KBM-7 (cell line): ENCODE measurements at regions of chrX and their contacts with region 1.

Region 1: GRCh38 chrX:154840856-154841255 is 6.4 kb upstream of the SMIM9 start:
- DNase-seq: peak; percentile 86

Region 2: DNA sequence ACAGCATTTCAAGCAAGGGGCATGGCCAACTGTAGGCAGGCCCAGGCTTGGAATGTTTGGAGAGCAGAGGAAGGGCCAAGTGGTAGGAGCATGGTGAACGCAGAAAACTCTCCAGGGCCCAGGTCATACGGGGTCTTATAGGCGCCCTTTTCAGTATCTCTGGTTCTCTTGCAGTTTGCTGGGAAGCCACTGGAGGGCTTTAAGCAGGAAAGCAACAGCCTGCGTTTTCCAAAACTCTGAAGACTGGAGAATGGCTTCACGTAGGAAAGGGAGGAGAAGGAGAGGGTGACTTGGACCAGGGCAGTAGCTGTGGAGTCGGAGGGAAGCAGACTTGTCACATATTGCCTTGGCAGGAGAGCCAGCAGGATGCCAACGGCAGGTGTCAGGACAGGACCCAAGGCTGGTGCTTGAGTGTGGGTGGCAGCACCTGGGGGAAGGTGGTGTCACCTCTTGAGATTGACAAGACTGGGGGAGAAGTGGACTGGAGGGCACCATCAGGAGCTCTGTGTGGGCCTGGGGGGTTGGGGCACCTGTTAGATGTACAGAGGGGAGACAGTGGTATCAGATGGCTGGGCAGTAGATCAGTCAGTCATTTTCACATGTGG is 523.4 kb before region 1 on chrX:
- in situ Hi-C with region 1: no loop called
- DNase-seq: peak; percentile 45

Region 3: DNA sequence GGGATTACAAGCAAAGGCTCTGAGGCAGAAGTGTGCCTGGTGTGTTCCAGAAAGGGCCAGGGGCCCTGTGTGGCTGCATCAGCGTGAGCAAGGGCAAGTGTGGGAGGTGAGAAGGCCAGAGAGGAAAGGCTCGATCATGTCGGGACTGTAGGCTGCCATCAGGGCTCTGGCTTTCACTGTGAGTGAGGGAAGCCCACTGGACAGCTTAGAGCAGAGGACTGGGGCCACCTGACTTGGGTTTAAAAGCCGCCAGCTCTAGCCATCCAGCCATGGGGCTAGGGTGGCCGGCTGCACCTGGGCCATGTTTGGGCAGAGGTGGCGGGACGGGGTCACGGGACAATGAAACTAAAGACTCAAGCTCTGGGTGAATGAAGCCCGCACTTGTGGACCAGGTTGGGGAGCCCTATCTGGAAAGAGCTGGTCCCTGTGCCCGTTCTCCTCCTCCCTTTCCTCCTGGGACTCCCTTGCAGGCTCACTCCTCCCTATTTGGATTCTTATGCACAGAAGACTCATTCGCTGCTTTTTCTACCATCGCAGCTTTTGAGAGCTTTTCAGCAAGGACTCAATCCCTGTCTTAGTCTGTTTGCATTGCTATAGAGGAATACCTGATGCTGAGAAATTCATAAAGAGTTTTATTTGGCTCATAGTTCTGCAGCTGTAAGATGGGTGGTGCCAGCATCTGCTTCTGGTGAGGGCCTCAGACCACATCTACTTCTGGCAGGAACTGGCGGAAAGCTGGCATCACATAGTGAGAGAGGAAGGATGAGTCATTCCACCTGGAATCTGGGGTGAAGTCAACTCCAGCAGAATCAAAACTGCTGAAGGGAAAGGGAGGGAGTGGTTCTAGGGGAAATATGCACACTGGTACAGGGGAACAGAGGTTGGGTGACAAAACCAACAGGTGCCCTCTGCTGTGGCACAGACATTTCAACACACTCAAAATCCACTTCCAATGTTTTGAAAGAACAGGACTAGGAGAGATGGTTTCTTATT is 237.1 kb before region 1 on chrX:
- in situ Hi-C with region 1: loop called (anchors 25 kb)
- DNase-seq: peak; percentile 10

Region 4: DNA sequence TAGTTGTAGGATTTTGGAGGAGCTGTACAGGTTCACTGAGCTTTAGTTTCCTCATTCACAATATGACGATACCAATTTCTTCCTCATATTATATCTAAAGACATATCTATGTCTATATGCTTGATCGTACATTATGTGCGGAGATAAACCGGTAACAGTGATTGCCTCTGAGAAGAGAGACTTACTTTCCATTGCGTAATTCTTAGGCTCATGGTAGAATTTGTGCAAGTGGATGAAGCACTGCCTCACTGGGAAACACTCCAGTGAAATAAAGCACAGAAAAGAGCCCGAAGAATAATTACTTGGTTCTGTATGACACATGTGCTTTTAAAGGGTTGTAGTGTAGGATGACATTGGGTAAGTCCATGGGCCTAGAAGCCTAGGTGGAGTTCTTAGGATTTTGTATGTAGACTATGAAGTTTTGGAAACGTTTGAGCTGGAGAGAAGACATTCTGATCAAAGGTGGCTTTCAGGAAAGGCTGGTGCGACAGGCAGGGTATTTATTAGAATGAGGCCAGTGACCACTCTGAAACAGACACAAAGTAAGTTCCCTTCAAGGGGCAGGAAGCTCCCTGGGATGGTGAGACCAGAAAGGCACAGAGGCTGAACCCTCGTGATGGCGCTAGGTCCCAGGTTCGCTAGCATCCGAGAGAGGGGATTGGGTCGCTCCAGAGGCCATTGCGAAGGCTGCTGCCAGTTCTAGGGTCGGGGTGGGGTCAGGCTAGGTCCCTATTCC is 374.8 kb after region 1 on chrX:
- in situ Hi-C with region 1: no loop called
- DNase-seq: no peak